ENCODE measurements at regions of chr1 and their contacts with region 1.

Region 1: DNA sequence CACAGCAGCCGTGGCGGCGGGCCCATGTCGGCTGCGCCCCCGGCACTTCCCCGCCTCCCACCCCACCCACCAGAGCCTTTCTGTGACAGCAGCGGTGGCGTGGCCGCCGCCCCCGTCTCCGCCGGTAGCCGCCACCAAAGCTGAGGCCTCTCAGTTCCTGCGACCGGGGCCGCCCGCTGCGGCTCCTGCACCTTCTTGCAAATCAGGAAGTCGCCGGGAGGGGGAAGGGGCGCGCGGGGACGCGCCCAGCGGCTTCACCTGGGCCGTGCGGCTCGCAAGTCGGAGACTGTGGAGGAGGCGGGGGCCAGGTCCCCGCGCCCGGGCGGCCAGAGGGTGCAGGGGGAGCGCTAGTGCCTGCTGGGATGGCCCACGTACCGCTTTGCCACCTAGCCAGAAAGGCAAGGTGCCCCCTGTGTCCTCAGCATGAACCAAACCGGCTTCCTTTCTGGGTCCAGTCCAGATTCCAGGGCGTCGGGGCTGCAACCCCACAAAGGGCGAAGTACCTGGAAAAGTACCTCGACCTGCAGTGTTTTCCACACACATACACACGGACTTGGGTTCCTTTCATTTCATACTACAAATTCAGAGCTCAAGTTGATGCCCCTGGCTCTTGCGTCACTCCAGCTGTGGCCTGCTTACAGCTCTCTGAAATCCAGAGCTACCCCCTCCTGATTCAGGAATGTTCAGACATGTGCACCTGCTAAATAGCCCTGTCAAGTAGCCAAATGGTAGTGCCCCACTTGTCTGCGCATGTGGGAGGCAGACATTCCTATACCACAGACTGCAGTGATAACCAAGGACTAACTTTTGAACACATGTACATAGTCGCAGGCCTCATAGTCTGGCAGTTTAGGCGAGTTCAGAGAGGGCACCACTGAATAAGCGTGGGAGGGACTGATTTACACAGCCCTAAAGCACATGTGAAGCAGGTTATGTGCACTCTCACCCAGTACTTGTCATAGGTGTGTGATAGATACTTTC is at the start of gene DENND1B:
- DNase-seq: peak; percentile 95
- H3K4me3 Mint-ChIP-seq: peak within 1 kb of the TSS; percentile 89
- H3K27ac Mint-ChIP-seq: peak within 1 kb of the TSS; percentile 99
- H3K4me1 Mint-ChIP-seq: peaks cover 61% of the 10 kb centered on the region
- H3K27me3 Mint-ChIP-seq: no peaks in the 10 kb centered on the region
- total RNA-seq, gene DENND1B: 15.0 and 16.8 TPM in 2 replicates

Region 2: GRCh38 chr1:197868751-197869489 is 93.3 kb after region 1 on chr1:
- intact Hi-C with region 1: loop called (anchors 2 kb)
- DNase-seq: peak; percentile 83
- H3K4me3 Mint-ChIP-seq: no peak overlapping the region
- H3K27ac Mint-ChIP-seq: no peak overlapping the region
- H3K4me1 Mint-ChIP-seq: peaks cover 1% of the 10 kb centered on the region
- H3K27me3 Mint-ChIP-seq: peaks cover 23% of the 10 kb centered on the region

Region 3: DNA sequence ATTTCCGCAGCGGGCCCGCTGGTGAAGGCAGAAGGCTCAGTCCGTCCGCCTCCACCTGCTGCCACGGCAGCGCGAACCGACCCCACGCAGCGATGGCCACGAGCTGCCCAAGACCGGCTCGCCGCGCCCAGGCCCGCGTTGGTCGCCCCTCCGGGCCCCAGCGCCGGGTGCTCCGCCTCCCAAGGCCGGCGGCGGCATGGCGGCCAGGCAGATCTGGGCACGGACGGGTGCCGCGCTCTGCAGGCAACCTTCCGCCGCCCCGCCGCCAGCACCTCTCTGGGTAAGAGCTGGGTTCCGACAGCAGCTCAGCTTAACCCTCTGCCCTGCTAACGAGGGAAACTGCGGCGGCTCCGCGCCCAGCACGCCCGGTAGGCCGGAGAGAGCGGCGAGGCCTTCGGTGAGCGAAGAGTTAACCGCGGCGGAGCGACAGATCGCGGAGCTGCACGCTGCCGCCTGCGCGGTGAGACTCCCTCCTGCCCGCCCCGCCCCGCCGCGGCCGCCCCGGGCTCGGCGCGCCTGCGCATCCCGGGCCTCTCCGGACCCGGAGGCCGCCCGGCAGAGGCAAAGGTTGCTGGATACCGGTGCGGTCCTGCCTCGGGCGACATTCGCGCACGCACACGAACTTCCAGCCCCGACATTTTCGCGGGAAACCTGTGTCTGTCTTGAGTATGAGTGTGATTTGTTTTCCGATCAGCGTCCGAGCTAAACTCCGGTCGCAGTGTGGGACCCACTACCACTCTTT is 127.1 kb after region 1 on chr1 and contains the start of gene C1orf53:
- intact Hi-C with region 1: loop called (anchors 2 kb)
- DNase-seq: peak; percentile 94
- H3K4me3 Mint-ChIP-seq: peak within 1 kb of the TSS; percentile 83
- H3K27ac Mint-ChIP-seq: peak within 1 kb of the TSS; percentile 80
- H3K4me1 Mint-ChIP-seq: peaks cover 8% of the 10 kb centered on the region
- H3K27me3 Mint-ChIP-seq: peaks cover 68% of the 10 kb centered on the region
- total RNA-seq, gene C1orf53: 1.0 and 1.3 TPM in 2 replicates

Region 4: GRCh38 chr1:197915862-197916499 is 140.4 kb after region 1 on chr1:
- intact Hi-C with region 1: loop called (anchors 5 kb)
- DNase-seq: peak; percentile 71
- H3K4me3 Mint-ChIP-seq: peak overlapping the region; percentile 80
- H3K27ac Mint-ChIP-seq: no peak overlapping the region
- H3K4me1 Mint-ChIP-seq: peaks cover 68% of the 10 kb centered on the region
- H3K27me3 Mint-ChIP-seq: peaks cover 97% of the 10 kb centered on the region

Region 5: GRCh38 chr1:198649968-198650338 is 874.4 kb after region 1 on chr1:
- intact Hi-C with region 1: loop called (anchors 5 kb)
- DNase-seq: peak; percentile 80
- H3K4me3 Mint-ChIP-seq: peak overlapping the region; percentile 81
- H3K27ac Mint-ChIP-seq: peak overlapping the region; percentile 88
- H3K4me1 Mint-ChIP-seq: peaks cover 58% of the 10 kb centered on the region
- H3K27me3 Mint-ChIP-seq: no peaks in the 10 kb centered on the region

Measured in activated CD4-positive, alpha-beta T cell treated with anti-CD3 and anti-CD28 coated beads, Interleukin-2, amount 10 ng/mL, durations not matched to agents 24 days and 14 days (primary cell).